ENCODE measurements at regions of chr6 and their contacts with region 1.

Region 1: DNA sequence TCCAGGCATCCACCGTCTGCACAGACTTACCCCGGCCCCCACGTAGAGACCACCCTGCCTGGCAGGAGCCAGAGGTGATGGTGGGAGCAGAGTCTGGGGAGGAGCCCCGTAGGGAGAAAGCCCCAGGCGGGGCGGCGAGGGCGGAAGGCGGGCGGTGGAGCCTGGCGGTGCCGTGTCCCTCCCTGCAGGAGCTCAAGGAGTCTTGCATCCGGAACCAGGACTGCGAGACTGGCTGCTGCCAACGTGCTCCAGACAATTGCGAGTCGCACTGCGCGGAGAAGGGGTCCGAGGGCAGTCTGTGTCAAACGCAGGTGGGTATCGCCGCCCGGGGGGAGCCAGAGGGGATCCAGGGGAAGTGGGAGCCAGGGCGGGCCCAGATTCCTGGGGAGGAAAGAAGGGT is 6.0 kb downstream of the CLPSL1 start:
- DNase-seq: peak in 2 of 10 donors; percentile 82 to 90

Region 2: DNA sequence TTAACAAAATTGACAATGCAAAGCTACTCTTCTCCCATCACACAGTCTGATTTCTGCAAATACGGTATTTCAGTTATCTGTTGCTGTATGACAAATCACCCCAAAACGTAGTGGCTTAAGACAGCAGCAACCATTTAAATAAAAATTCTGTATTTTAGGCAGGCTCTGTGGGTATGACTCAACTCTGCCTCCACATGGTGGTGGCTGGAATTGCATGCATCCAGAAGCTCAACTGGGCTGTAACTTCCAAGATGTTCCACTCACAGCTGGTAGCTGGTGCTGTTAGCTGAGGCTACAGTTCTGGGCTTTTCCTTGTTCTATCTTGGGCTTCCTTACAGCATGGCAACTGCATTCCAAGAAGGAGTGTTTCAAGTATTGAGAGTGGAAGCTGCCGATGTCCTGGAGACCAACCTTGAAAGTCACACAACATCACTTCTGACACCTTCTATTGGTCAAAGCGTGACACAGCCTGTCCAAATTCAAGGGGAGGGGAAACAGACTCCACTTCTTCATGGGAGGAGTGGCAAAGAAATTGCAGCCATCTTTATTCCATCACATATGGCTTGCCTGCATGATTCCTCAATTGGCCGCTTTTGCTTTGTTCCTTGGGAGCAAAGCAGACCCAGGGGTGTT is 234.4 kb before region 1 on chr6:
- intact Hi-C with region 1: no loop called
- DNase-seq: no peak

Region 3: GRCh38 chr6:35569011-35569461 is 217.8 kb before region 1 on chr6:
- intact Hi-C with region 1: no loop called
- DNase-seq: peak in 7 of 10 donors; percentile 11 to 81 (median 32)

Region 4: DNA sequence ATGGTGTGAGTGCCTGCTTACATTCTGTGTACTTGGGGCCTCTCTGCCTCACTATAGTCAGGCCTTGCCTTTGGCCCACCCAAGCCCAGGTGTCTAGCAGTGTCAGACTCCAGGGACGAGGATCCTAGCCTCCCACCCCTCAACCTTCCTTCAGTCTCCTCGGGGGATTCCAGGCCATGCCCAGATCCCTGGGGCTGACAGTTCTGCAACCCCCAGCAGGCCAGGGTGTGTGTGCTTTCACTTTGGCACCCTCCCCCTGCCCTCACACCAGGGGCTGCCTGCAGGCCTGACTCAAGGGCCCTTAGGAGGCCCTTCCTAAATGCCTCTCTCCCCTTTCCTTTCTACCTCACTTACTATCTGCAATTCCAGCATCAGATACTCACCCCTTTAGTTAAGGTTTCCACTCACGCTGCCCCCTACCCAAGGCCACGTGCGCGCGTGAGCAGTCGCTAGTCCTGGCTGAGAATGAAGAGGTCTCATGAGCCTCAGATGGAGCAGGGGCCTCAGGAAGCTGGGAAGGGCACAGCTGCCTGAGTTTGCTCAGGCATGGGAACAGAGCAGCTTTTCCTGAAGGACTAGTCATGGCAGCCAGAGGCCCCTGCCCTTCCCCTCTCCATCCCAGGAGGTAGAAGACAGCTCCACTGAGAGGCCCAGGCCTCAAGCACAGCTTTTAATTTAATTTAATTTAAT is 11.2 kb after region 1 on chr6:
- intact Hi-C with region 1: loop called (anchors 1 kb)
- DNase-seq: peak in 1 of 10 donors; percentile 72

Region 5: GRCh38 chr6:36075656-36076055 is 288.8 kb after region 1 on chr6:
- intact Hi-C with region 1: no loop called
- DNase-seq: no peak